MCF 10A (cell line): ENCODE measurements at regions of chr17 and their contacts with region 1.

Region 1: GRCh38 chr17:82134101-82134500 is 36.1 kb upstream of the FASN start:
- DNase-seq: peak; percentile 82
- H3K4me3 Mint-ChIP-seq: peak overlapping the region; percentile 55
- H3K27ac Mint-ChIP-seq: peak overlapping the region; percentile 98
- H3K4me1 Mint-ChIP-seq: peaks cover 15% of the 10 kb centered on the region
- H3K27me3 Mint-ChIP-seq: no peaks in the 10 kb centered on the region
- CTCF ChIP-seq: no peak

Region 2: GRCh38 chr17:81379523-81379942 is 754.6 kb before region 1 on chr17:
- CTCF ChIA-PET with region 1: no interaction called
- POLR2A ChIA-PET with region 1: no interaction called
- intact Hi-C with region 1: no loop called
- DNase-seq: peak; percentile 42
- H3K4me3 Mint-ChIP-seq: no peak overlapping the region
- H3K27ac Mint-ChIP-seq: no peak overlapping the region
- H3K4me1 Mint-ChIP-seq: no peaks in the 10 kb centered on the region
- H3K27me3 Mint-ChIP-seq: no peaks in the 10 kb centered on the region
- CTCF ChIP-seq: no peak

Region 3: GRCh38 chr17:82056729-82057621 is 77.1 kb before region 1 on chr17:
- CTCF ChIA-PET with region 1: no interaction called
- POLR2A ChIA-PET with region 1: no interaction called
- intact Hi-C with region 1: no loop called
- DNase-seq: no peak
- H3K4me3 Mint-ChIP-seq: no peak overlapping the region
- H3K27ac Mint-ChIP-seq: no peak overlapping the region
- H3K4me1 Mint-ChIP-seq: no peaks in the 10 kb centered on the region
- H3K27me3 Mint-ChIP-seq: no peaks in the 10 kb centered on the region
- CTCF ChIP-seq: no peak

Region 4: GRCh38 chr17:82105882-82106687 is 28.0 kb before region 1 on chr17:
- CTCF ChIA-PET with region 1: interaction called, 7 read pairs
- POLR2A ChIA-PET with region 1: interaction called, 62 read pairs
- intact Hi-C with region 1: no loop called
- DNase-seq: peak; percentile 91
- H3K4me3 Mint-ChIP-seq: peak overlapping the region; percentile 75
- H3K27ac Mint-ChIP-seq: peak overlapping the region; percentile 86
- H3K4me1 Mint-ChIP-seq: peaks cover 17% of the 10 kb centered on the region
- H3K27me3 Mint-ChIP-seq: no peaks in the 10 kb centered on the region
- CTCF ChIP-seq: peak; percentile 28

Region 5: DNA sequence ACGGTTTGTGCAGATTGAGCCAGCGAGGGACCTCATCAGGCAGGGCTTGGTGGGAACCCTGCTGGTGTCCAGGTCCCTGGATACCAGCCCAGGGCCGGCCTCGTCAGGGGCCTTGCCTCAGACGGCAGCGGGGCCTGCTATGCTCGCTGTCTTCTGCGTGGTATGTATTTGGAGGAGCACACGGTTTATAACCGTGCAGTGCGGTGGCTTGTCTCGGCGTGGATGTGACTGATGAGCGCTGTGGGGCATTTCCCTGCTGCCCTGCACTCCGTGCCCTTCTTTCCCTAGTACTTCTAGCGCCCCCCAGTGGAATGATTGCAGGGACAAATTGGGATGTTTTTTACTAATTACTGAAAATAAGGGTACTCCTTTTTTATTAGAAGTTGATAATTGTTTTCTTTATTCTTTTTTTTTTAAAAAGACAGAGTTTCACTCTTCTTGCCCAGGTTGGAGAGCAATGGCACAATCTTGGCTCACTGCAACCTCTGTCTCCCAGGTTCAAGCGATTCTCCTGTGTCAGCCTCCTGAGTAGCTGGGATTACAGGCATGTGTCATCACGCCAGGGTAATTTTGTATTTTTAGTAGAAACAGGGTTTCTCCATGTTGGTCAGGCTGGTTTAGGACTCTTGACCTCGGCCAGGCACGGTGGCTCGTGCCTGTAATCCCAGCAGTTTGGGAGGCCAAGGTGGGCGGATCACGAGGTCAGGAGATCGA is 633.1 kb after region 1 on chr17:
- CTCF ChIA-PET with region 1: no interaction called
- POLR2A ChIA-PET with region 1: no interaction called
- intact Hi-C with region 1: no loop called
- DNase-seq: peak; percentile 60
- H3K4me3 Mint-ChIP-seq: no peak overlapping the region
- H3K27ac Mint-ChIP-seq: no peak overlapping the region
- H3K4me1 Mint-ChIP-seq: peaks cover 4% of the 10 kb centered on the region
- H3K27me3 Mint-ChIP-seq: no peaks in the 10 kb centered on the region
- CTCF ChIP-seq: peak; percentile 52